Thyroid gland (tissue), 4 donors: ENCODE measurements at regions of chr2 and their contacts with region 1.

Region 1: GRCh38 chr2:210171309-210172203 is at the start of gene KANSL1L:
- DNase-seq: peak; percentile 99 to 100
- H3K4me3 ChIP-seq: peak within 1 kb of the TSS; percentile 27 to 74 (median 67)
- H3K27ac ChIP-seq: peak within 1 kb of the TSS; percentile 98 to 100 (median 100)
- H3K4me1 ChIP-seq: peaks cover 19 to 23% of the 10 kb centered on the region in 2 donors
- H3K27me3 ChIP-seq: no peaks in the 10 kb centered on the region
- CTCF ChIP-seq: no peak
- POLR2A ChIP-seq: peak; percentile 24 to 96
- total RNA-seq, gene KANSL1L: 75.8 to 154 (median 96.9) TPM

Region 2: DNA sequence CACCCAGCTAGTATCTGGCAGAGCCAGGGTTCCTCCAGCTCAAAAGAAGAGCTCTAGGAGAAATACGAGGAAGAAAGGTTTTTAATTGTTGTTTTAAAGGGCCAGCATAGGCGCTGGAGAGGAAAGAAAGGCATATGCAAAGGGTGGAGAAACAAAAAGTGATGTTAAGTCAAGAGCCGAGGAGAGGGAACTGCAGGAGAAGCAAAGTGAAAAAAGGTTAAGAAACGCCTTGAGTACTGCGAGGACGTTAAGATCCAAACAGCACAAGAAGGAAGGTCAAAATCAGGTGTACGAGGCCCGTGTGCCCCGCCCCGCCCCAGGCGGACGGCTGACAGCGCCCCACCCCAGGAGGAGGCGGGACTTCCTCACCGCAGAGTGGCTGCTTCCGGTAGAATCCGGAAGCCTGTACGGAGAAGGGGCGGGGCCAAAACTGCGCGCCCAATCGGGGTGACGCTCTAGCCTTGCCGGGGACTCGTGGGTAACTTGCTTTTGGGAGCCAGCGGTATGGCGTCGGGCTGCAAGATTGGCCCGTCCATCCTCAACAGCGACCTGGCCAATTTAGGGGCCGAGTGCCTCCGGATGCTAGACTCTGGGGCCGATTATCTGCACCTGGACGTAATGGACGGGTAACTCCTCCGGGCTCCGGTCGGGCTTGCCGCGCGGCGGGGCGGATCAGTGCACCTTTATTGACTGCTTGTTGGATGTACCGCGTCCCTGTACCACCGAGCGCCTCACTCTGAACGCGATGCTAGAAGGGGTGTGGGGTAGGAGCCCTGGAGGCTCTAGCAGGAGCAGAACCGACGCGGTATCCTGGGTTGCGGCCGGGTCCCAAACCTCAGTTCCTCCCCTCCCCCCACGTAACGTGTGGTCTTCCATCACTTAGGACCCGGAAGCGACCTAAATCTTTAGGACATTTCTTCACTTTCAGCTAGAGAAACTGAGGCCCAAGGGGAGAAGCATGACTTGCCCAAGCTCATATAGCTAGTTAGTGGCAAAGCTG is 169.1 kb before region 1 on chr2 and contains the start of gene RPE:
- intact Hi-C with region 1: loop called (anchors 10 kb)
- DNase-seq: peak; percentile 97 to 98
- H3K4me3 ChIP-seq: peak within 1 kb of the TSS; percentile 82 to 93 (median 87)
- H3K27ac ChIP-seq: peak within 1 kb of the TSS; percentile 43 to 90 (median 75)
- H3K4me1 ChIP-seq: peaks cover 20 to 23% of the 10 kb centered on the region in 2 donors
- H3K27me3 ChIP-seq: no peaks in the 10 kb centered on the region
- CTCF ChIP-seq: no peak
- POLR2A ChIP-seq: peak in 1 of 2 donors; percentile 60
- total RNA-seq, gene RPE: 67.3 to 190 (median 87.2) TPM